ENCODE measurements at regions of chrX and their contacts with region 1.

Region 1: GRCh38 chrX:152904151-152905080 is 6.5 kb downstream of the ZNF185 start:
- DNase-seq: no peak
- ATAC-seq: peak; percentile 77
- H3K4me3 ChIP-seq: no peak overlapping the region
- H3K27ac ChIP-seq: no peak overlapping the region
- H3K4me1 ChIP-seq: peaks cover 3% of the 10 kb centered on the region
- H3K27me3 ChIP-seq: no peaks in the 10 kb centered on the region
- CTCF ChIP-seq: peak; percentile 72 to 81 (median 77)
- EP300 ChIP-seq: no peak
- POLR2A ChIP-seq: no peak
- RAD21 ChIP-seq: peak; percentile 34; the same call in 1 of the 2 replicates

Region 2: DNA sequence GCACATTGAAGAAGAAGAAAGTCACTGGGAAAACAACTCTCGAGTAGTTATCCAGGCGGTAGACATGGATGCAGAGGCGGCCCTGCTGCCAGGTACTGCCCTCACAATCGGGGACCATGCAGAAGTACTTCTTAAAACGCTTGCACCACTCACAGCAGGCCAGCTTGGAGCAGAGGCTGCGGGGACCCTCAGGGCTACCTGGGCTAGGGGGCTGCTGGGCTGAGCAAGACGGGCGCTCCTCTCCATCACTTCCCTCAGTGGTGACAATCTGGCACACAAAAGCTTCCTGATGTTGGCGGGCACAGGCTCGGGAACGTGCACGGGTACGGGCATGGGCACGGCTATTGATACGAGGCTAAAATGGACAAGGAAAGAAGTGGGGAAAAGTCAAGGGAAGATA is 949.7 kb before region 1 on chrX:
- CTCF ChIA-PET with region 1: no interaction called
- POLR2A ChIA-PET with region 1: no interaction called
- RAD21 ChIA-PET with region 1: no interaction called
- SMC1A ChIA-PET with region 1: no interaction called
- in situ Hi-C with region 1: no loop called
- intact Hi-C with region 1: no loop called
- DNase-seq: no peak
- ATAC-seq: no peak
- H3K4me3 ChIP-seq: no peak overlapping the region
- H3K27ac ChIP-seq: no peak overlapping the region
- H3K4me1 ChIP-seq: no peaks in the 10 kb centered on the region
- H3K27me3 ChIP-seq: no peaks in the 10 kb centered on the region
- CTCF ChIP-seq: no peak
- EP300 ChIP-seq: no peak
- POLR2A ChIP-seq: no peak
- RAD21 ChIP-seq: no peak

Region 3: GRCh38 chrX:152926279-152926678 is 21.9 kb after region 1 on chrX:
- CTCF ChIA-PET with region 1: interaction called, 25 read pairs
- POLR2A ChIA-PET with region 1: no interaction called
- RAD21 ChIA-PET with region 1: interaction called, 11 read pairs
- SMC1A ChIA-PET with region 1: interaction called, 3 read pairs
- in situ Hi-C with region 1: no loop called
- intact Hi-C with region 1: no loop called
- DNase-seq: no peak
- ATAC-seq: peak; percentile 94
- H3K4me3 ChIP-seq: no peak overlapping the region
- H3K27ac ChIP-seq: no peak overlapping the region
- H3K4me1 ChIP-seq: no peaks in the 10 kb centered on the region; the same call in 1 of the 2 replicates
- H3K27me3 ChIP-seq: no peaks in the 10 kb centered on the region
- CTCF ChIP-seq: peak; percentile 51 to 60 (median 58); a peak in 5 of 6 replicates
- EP300 ChIP-seq: no peak
- POLR2A ChIP-seq: no peak
- RAD21 ChIP-seq: peak; percentile 53

Region 4: DNA sequence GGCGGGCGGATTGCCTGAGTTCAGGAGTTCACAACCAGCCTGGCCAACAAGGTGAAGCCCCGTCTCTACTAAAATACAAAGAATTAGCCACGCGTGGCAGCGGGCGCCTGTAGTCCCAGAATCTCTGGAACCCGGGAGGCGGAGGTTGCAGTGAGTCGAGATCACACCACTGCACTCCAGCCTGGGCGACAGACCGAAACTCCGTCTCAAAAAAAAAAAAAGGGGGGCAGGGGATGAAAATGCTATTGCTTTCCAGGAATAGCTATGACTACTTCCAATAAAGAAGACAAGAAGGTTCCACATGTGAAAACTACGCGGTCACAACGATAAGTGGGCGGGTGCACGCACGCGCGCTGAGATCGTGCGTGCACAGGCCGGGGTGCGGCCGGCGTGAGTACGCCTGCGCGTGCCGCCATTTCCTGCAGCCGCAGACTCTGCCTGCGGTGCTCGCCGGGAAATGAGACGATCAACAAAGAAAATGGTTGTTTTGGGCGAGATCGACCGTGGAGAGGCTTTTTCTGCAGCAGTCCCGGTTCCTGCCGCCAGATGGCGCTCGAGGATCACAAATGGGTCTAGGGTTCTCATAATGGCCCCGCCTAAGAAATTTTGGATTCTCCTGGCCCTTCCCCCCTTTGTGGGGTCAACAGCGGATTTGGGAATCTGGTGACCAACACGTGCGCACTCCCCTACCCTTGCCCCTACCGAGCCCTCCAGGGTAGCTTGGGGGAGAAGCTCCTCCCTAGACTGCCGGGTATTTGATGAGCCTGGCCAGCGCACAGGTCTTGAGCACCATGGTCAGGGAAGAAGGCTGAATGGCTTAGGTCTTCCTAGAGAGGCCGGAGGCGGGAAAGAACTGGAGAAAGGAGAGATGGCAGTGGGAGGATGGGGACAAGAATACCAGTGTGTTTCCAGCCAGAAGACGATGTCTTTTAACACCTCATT is 54.4 kb after region 1 on chrX:
- CTCF ChIA-PET with region 1: no interaction called
- POLR2A ChIA-PET with region 1: no interaction called
- RAD21 ChIA-PET with region 1: no interaction called
- SMC1A ChIA-PET with region 1: no interaction called
- in situ Hi-C with region 1: no loop called
- intact Hi-C with region 1: no loop called
- DNase-seq: peak; percentile 55
- ATAC-seq: peak; percentile 100
- H3K4me3 ChIP-seq: peak overlapping the region; percentile 53; the same call in 1 of the 2 replicates
- H3K27ac ChIP-seq: no peak overlapping the region
- H3K4me1 ChIP-seq: no peaks in the 10 kb centered on the region
- H3K27me3 ChIP-seq: no peaks in the 10 kb centered on the region
- CTCF ChIP-seq: peak; percentile 87 to 97 (median 89)
- EP300 ChIP-seq: no peak
- POLR2A ChIP-seq: 0 out of 2 replicates have a peak, but pooled peaks have one; percentile 38
- RAD21 ChIP-seq: peak; percentile 90

Region 5: GRCh38 chrX:153102436-153102835 is 198.0 kb after region 1 on chrX:
- CTCF ChIA-PET with region 1: no interaction called
- POLR2A ChIA-PET with region 1: no interaction called
- RAD21 ChIA-PET with region 1: no interaction called
- SMC1A ChIA-PET with region 1: no interaction called
- in situ Hi-C with region 1: no loop called
- intact Hi-C with region 1: no loop called
- DNase-seq: no peak
- ATAC-seq: no peak
- H3K4me3 ChIP-seq: no peak overlapping the region
- H3K27ac ChIP-seq: no peak overlapping the region
- H3K4me1 ChIP-seq: no peaks in the 10 kb centered on the region
- H3K27me3 ChIP-seq: no peaks in the 10 kb centered on the region
- CTCF ChIP-seq: no peak
- EP300 ChIP-seq: no peak
- POLR2A ChIP-seq: no peak
- RAD21 ChIP-seq: no peak